A673 (cell line): ENCODE measurements at regions of chr3 and their contacts with region 1.

Region 1: GRCh38 chr3:133578548-133579191 is 5.2 kb downstream of the CDV3 start:
- DNase-seq: peak; percentile 64
- H3K4me3 ChIP-seq: no peak overlapping the region
- H3K27ac ChIP-seq: no peak overlapping the region
- H3K4me1 ChIP-seq: peaks cover 7% of the 10 kb centered on the region
- H3K27me3 ChIP-seq: no peaks in the 10 kb centered on the region
- CTCF ChIP-seq: peak; percentile 69

Region 2: GRCh38 chr3:132722164-132723024 is 856.3 kb before region 1 on chr3 and contains the start of gene NPHP3:
- CTCF ChIA-PET with region 1: no interaction called
- POLR2A ChIA-PET with region 1: interaction called, 6 read pairs
- intact Hi-C with region 1: loop called (anchors 5 kb)
- DNase-seq: peak; percentile 94
- H3K4me3 ChIP-seq: peak within 1 kb of the TSS; percentile 97
- H3K27ac ChIP-seq: peak within 1 kb of the TSS; percentile 73
- H3K4me1 ChIP-seq: no peaks in the 10 kb centered on the region
- H3K27me3 ChIP-seq: no peaks in the 10 kb centered on the region
- CTCF ChIP-seq: no peak
- total RNA-seq, gene NPHP3: 5.8 and 9.0 TPM in 2 replicates

Region 3: DNA sequence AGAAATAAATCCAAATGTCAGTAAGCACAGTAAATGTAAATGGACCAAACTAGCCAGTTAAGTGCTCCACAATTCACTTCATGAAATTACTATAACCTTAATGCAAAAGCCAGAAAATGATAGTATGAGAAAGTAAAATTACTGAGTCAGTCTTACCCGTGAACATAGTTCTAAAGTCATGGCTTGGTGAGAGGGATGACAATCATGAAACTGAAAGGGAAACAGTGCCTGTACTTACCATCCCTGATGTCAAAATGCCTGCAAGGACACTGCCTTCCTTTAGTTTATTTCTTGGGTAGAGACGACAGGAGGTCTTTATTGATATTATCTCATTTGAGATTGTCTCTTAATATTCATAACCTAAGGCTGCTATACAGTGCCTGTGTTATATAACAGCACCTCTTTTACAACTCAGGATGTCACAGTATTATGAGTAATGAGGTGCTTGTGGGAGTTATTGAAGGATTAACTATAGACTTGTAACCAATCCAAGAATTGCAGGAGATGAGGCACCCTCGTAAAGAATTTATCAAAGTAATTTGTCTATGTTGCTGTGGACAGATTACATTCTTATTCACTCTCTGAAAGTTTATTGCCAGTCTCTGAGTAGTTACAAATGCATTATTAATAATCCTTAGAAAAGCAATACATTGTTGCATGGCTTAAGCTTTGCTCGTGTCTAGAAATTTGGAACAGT is 321.7 kb before region 1 on chr3:
- CTCF ChIA-PET with region 1: no interaction called
- POLR2A ChIA-PET with region 1: no interaction called
- intact Hi-C with region 1: no loop called
- DNase-seq: peak; percentile 77
- H3K4me3 ChIP-seq: no peak overlapping the region
- H3K27ac ChIP-seq: no peak overlapping the region
- H3K4me1 ChIP-seq: peaks cover 18% of the 10 kb centered on the region
- H3K27me3 ChIP-seq: peaks cover 10% of the 10 kb centered on the region
- CTCF ChIP-seq: no peak

Region 4: GRCh38 chr3:133487920-133488540 is 90.6 kb before region 1 on chr3:
- CTCF ChIA-PET with region 1: no interaction called
- POLR2A ChIA-PET with region 1: no interaction called
- intact Hi-C with region 1: loop called (anchors 5 kb)
- DNase-seq: peak; percentile 42
- H3K4me3 ChIP-seq: no peak overlapping the region
- H3K27ac ChIP-seq: no peak overlapping the region
- H3K4me1 ChIP-seq: no peaks in the 10 kb centered on the region
- H3K27me3 ChIP-seq: no peaks in the 10 kb centered on the region
- CTCF ChIP-seq: peak; percentile 57

Region 5: DNA sequence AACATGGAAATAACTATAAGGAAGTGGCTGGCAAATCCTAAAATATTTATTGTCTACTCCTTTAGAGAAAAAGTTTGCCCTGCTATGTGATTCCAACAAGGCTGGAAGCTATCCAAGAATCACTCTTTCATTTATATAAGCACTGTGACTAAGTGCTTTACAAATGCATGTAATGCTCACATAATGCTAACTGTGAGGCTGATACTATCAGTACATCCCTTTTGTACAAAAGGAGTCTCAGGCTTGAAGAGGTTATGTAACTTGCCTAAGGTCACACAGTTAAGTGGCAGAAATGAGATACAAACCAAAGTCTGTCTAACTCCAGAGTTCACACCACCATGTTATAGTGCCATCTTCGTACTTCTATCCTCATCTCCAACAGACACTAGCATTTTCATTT is 66.1 kb after region 1 on chr3:
- CTCF ChIA-PET with region 1: no interaction called
- POLR2A ChIA-PET with region 1: no interaction called
- intact Hi-C with region 1: no loop called
- DNase-seq: peak; percentile 77
- H3K4me3 ChIP-seq: no peak overlapping the region
- H3K27ac ChIP-seq: no peak overlapping the region
- H3K4me1 ChIP-seq: peaks cover 12% of the 10 kb centered on the region
- H3K27me3 ChIP-seq: no peaks in the 10 kb centered on the region
- CTCF ChIP-seq: no peak

Region 6: GRCh38 chr3:133973249-133973980 is 394.7 kb after region 1 on chr3:
- CTCF ChIA-PET with region 1: no interaction called
- POLR2A ChIA-PET with region 1: no interaction called
- intact Hi-C with region 1: no loop called
- DNase-seq: peak; percentile 10
- H3K4me3 ChIP-seq: no peak overlapping the region
- H3K27ac ChIP-seq: no peak overlapping the region
- H3K4me1 ChIP-seq: no peaks in the 10 kb centered on the region
- H3K27me3 ChIP-seq: no peaks in the 10 kb centered on the region
- CTCF ChIP-seq: no peak